Naive thymus-derived CD4-positive, alpha-beta T cell (primary cell): ENCODE measurements at regions of chr14 and their contacts with region 1.

Region 1: GRCh38 chr14:31026395-31027118 is 378 bp upstream of the STRN3 start:
- DNase-seq: peak; percentile 74 to 93 (median 80)
- ATAC-seq: peak; percentile 97
- H3K4me3 ChIP-seq: peak overlapping the region; percentile 84
- H3K4me3 Mint-ChIP-seq: peak overlapping the region; percentile 86 to 100 (median 96)
- H3K27ac ChIP-seq: peak overlapping the region; percentile 91
- H3K27ac Mint-ChIP-seq: peak overlapping the region; percentile 89 to 98 (median 96)
- H3K4me1 ChIP-seq: no peaks in the 10 kb centered on the region
- H3K4me1 Mint-ChIP-seq: peaks cover 38 to 62% (median 49%) of the 10 kb centered on the region in 7 donors
- H3K27me3 ChIP-seq: no peaks in the 10 kb centered on the region
- H3K27me3 Mint-ChIP-seq: no peaks in the 10 kb centered on the region

Region 2: GRCh38 chr14:30558675-30559555 is 467.6 kb before region 1 on chr14 and contains the start of gene G2E3:
- CTCF ChIA-PET with region 1: no interaction called
- POLR2A ChIA-PET with region 1: interaction called, 5 read pairs
- intact Hi-C with region 1: loop called (anchors 2 to 5 kb)
- DNase-seq: peak; percentile 75 to 91 (median 85)
- ATAC-seq: peak; percentile 100
- H3K4me3 ChIP-seq: peak within 1 kb of the TSS; percentile 76
- H3K4me3 Mint-ChIP-seq: peak within 1 kb of the TSS; percentile 97 to 100 (median 99)
- H3K27ac ChIP-seq: peak within 1 kb of the TSS; percentile 77
- H3K27ac Mint-ChIP-seq: peak within 1 kb of the TSS; percentile 93 to 100 (median 98)
- H3K4me1 ChIP-seq: peaks cover 5 to 12% of the 10 kb centered on the region in 2 donors
- H3K4me1 Mint-ChIP-seq: peaks cover 24 to 43% (median 28%) of the 10 kb centered on the region in 7 donors
- H3K27me3 ChIP-seq: no peaks in the 10 kb centered on the region
- H3K27me3 Mint-ChIP-seq: peaks cover 0 to 4% (median 0%) of the 10 kb centered on the region in 5 donors
- total RNA-seq, gene G2E3: 25.0 to 29.7 (median 28.6) TPM

Region 3: GRCh38 chr14:30980980-30981379 is 45.6 kb before region 1 on chr14:
- CTCF ChIA-PET with region 1: interaction called, 4 read pairs
- POLR2A ChIA-PET with region 1: interaction called, 5 read pairs
- intact Hi-C with region 1: loop called (anchors 2 kb)
- DNase-seq: no peak
- ATAC-seq: no peak
- H3K4me3 ChIP-seq: no peak overlapping the region
- H3K4me3 Mint-ChIP-seq: no peak overlapping the region
- H3K27ac ChIP-seq: no peak overlapping the region
- H3K27ac Mint-ChIP-seq: peak overlapping the region in 7 of 9 donors; percentile 19 to 74 (median 50)
- H3K4me1 ChIP-seq: no peaks in the 10 kb centered on the region
- H3K4me1 Mint-ChIP-seq: peaks cover 7 to 40% (median 32%) of the 10 kb centered on the region in 7 donors
- H3K27me3 ChIP-seq: no peaks in the 10 kb centered on the region
- H3K27me3 Mint-ChIP-seq: no peaks in the 10 kb centered on the region

Region 4: GRCh38 chr14:31084385-31084784 is 57.8 kb after region 1 on chr14:
- CTCF ChIA-PET with region 1: interaction called, 3 read pairs
- POLR2A ChIA-PET with region 1: no interaction called
- intact Hi-C with region 1: loop called (anchors 1 to 2 kb)
- DNase-seq: no peak
- ATAC-seq: no peak
- H3K4me3 ChIP-seq: no peak overlapping the region
- H3K4me3 Mint-ChIP-seq: no peak overlapping the region
- H3K27ac ChIP-seq: no peak overlapping the region
- H3K27ac Mint-ChIP-seq: no peak overlapping the region
- H3K4me1 ChIP-seq: no peaks in the 10 kb centered on the region
- H3K4me1 Mint-ChIP-seq: no peaks in the 10 kb centered on the region
- H3K27me3 ChIP-seq: no peaks in the 10 kb centered on the region
- H3K27me3 Mint-ChIP-seq: no peaks in the 10 kb centered on the region

Region 5: DNA sequence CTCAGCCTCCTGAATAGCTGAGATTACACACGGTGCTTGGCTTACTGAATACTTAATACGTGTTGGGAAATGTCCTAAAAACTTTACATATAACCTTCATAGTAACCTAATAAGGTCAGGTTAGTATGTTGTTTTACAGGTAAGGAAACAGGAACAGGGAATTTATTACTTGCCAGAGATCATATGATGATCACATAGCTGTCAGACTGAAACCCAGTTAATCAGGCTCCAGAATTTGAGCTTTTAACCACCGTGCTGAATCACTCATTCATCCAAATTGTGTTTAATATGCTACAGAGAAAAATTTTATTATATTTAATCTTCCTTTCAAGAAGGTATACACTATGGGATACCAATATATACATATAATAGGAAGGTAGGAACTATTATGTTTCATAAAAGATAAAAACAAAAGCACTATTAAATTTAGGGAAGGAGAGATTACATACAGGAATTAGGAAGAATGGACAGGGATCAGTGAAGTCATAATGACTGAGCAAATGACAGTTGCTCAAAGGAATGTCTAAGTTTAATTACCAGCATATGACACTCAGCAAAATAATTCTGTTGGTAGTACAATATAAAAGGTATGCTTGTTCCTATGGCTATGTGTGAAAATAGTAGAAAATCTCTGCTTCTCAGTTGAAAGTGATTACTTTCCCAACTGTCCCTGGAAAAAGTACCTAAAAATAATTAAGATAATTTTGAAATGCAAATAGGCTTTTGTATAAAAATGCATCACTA is 334.5 kb after region 1 on chr14:
- CTCF ChIA-PET with region 1: interaction called, 3 read pairs
- POLR2A ChIA-PET with region 1: interaction called, 3 read pairs
- intact Hi-C with region 1: loop called in 1 of 2 experiments (anchors 5 kb)
- DNase-seq: no peak
- ATAC-seq: no peak
- H3K4me3 ChIP-seq: no peak overlapping the region
- H3K4me3 Mint-ChIP-seq: no peak overlapping the region
- H3K27ac ChIP-seq: no peak overlapping the region
- H3K27ac Mint-ChIP-seq: no peak overlapping the region
- H3K4me1 ChIP-seq: no peaks in the 10 kb centered on the region
- H3K4me1 Mint-ChIP-seq: peaks cover 0 to under 1% (median 0%) of the 10 kb centered on the region in 7 donors
- H3K27me3 ChIP-seq: no peaks in the 10 kb centered on the region
- H3K27me3 Mint-ChIP-seq: no peaks in the 10 kb centered on the region

Region 6: DNA sequence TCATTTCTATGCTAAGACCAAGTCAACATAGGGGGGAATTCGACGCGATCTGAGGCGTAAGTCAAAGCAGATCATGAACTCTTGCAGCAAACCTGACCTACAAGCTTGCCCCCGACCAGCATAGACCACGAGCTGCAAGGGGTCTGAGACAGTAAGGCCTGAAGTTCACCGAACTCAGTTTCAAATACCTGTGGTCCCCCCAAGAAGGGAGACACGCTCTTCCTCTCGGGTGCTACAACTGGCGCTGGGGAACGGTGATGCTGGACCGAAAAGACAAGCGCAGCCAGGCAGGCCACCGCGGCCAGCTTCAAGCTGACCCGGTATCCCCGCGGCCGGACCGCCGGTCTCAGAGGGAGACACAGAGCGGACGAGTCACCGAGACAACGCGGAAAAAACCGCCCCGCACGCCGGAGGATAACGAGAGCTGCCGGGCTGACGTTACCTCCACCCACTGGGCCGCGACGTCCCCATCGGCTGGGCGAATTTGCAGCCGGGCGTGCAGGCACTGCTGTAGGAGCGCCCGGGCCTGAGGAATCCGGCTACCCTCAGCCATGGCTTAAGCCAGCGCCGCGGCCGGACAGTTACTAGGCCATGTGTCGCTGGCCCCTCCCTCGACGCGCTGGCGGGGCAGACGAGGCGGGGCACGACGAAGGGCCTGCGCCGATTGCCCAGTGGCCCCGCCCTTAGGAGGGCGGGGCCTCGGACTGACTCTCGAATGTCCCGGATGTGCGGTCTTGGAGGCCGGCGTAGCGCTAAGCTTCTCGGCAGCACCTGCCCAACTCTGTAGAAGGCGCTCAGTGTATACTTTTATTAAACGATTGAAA is 430.5 kb after region 1 on chr14 and contains the start of gene DTD2:
- CTCF ChIA-PET with region 1: no interaction called
- POLR2A ChIA-PET with region 1: no interaction called
- intact Hi-C with region 1: loop called (anchors 1 kb)
- DNase-seq: peak; percentile 80 to 89 (median 86)
- ATAC-seq: peak; percentile 99
- H3K4me3 ChIP-seq: peak within 1 kb of the TSS; percentile 82
- H3K4me3 Mint-ChIP-seq: peak within 1 kb of the TSS; percentile 92 to 98 (median 96)
- H3K27ac ChIP-seq: peak within 1 kb of the TSS; percentile 77
- H3K27ac Mint-ChIP-seq: peak within 1 kb of the TSS; percentile 89 to 98 (median 95)
- H3K4me1 ChIP-seq: peaks cover 6% of the 10 kb centered on the region in 2 donors
- H3K4me1 Mint-ChIP-seq: peaks cover 14 to 48% (median 40%) of the 10 kb centered on the region in 7 donors
- H3K27me3 ChIP-seq: no peaks in the 10 kb centered on the region
- H3K27me3 Mint-ChIP-seq: peaks cover 0 to 5% (median 0%) of the 10 kb centered on the region in 5 donors
- total RNA-seq, gene DTD2: 13.4 to 20.2 (median 18.6) TPM